Mammary epithelial cell (primary cell): ENCODE measurements at regions of chr6 and their contacts with region 1.

Region 1: GRCh38 chr6:1123386-1124375 is 188.2 kb upstream of the FOXQ1 start:
- DNase-seq: no peak
- H3K4me3 ChIP-seq: no peak overlapping the region
- H3K27ac ChIP-seq: no peak overlapping the region
- H3K4me1 ChIP-seq: no peaks in the 10 kb centered on the region
- H3K27me3 ChIP-seq: no peaks in the 10 kb centered on the region
- CTCF ChIP-seq: no peak

Region 2: DNA sequence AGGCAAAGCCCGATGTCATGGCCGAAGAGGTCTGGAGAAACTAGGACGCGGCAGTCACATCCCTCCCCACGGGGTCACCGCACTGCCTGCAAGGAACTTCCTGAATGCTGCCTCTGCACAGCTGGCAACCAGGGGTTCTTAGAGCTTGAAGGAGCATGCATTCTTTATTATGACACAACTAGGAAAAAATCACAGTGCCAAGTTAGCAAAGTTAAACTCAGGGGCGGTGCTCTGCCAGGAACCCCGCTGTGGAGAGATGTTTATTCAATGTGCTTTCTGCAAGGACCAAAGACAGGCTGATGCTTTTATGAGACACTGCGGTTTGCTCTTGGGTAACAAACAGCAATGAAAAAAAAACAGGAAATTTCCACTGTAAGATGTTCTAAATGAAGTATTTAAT is 99.1 kb before region 1 on chr6:
- CTCF ChIA-PET with region 1: no interaction called
- dilution Hi-C with region 1: loop called (anchors 5 kb)
- in situ Hi-C with region 1: no loop called
- intact Hi-C with region 1: no loop called
- DNase-seq: peak; percentile 17
- H3K4me3 ChIP-seq: no peak overlapping the region
- H3K27ac ChIP-seq: no peak overlapping the region
- H3K4me1 ChIP-seq: no peaks in the 10 kb centered on the region
- H3K27me3 ChIP-seq: no peaks in the 10 kb centered on the region
- CTCF ChIP-seq: no peak